Cardiac septum (tissue), 1 donor: ENCODE measurements at regions of chr3 and their contacts with region 1.

Region 1: DNA sequence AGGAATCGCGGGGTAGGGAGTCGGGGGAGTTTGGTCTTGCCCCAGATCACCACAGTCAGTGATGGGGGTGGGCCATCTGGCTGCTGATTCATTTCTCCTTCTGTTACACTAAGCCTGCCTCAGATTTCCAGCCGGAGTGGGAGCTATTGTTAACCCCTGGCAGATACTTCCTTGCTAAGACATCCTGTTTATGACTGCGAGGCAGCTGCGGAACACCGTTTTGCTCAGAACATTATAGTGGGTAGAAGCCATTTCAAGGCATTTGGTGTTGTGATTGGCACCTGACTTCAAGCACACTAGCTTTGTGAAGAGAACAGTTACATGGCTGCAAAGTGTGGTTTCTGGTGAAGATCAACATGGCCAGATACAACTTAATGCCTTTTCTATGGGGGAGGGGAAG is 73.8 kb downstream of the FLNB start:
- DNase-seq: no peak

Region 2: GRCh38 chr3:58116161-58116955 is 34.3 kb after region 1 on chr3:
- intact Hi-C with region 1: loop called (anchors 5 kb)
- DNase-seq: no peak